MCF 10A (cell line): ENCODE measurements at regions of chr22 and their contacts with region 1.

Region 1: DNA sequence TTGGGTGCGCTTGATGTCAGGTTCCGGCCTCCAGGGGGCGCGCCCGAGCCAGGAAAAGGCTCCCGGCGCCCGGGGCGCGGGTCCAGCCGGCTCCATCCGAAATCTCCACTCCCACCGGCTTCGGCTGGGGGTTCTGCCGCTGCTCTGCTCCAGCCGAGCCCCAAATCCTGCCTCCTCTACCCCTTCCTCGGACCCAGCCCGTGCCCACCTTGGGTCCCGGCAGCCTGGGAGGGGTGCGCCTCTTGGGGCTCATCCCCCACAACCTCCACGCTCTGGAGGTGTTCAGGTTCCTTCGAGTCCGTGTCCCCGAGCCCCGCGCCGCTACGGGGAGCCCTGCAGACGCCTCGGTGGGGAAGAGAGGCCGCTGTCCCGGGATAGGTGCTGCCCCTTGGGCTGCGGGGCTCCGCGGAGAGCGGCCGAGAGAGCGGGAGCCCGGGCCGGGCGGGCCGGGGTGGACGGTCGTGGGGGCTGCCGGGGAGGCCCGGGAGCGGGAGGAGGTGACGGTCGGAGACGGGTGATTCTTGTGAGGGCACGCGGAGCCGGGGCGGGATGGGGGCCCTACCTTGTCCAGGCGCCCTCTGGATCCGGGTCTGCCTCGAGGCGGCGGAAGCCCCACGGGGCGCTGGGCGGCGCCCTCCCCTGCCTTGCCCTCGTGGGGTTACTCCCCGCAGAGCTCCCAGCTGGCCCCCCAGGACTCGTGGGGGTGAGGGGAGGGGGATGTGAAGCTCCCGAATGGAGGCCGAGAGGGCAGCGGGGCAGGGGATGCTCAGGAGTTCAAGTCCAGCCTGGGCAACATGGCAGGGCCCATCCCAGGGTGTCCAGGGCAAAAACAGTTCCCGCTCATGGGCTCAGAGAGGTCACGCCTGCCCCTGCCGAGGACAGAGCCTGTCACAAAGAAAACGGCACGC is 13.2 kb upstream of the CYB5R3 start:
- DNase-seq: peak; percentile 74
- H3K4me3 Mint-ChIP-seq: peak overlapping the region; percentile 28
- H3K27ac Mint-ChIP-seq: no peak overlapping the region
- H3K4me1 Mint-ChIP-seq: no peaks in the 10 kb centered on the region
- H3K27me3 Mint-ChIP-seq: no peaks in the 10 kb centered on the region
- CTCF ChIP-seq: peak; percentile 89

Region 2: DNA sequence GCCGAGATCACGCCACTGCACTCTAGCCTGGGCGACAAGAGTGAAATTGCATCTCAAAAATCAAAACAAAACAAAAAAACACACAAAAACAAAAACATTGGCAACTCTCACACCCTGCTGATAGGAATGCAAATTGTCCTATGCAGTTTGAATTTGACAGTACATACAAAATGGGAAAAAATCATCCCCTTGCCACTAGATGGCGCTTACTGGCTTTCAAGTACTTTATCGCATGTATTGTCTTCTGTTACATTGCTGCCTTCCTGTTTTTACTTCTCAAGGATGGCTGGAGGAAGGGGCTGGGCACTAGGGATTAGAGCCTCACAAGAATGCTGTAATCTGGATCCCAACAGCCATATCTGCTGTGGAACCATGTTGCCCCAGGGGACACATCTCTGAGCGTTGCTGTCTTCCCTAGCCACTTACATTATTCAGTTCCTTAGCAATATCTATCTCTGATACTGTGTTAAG is 117.7 kb after region 1 on chr22:
- CTCF ChIA-PET with region 1: interaction called, 3 read pairs
- POLR2A ChIA-PET with region 1: no interaction called
- intact Hi-C with region 1: loop called (anchors 1 kb)
- DNase-seq: peak; percentile 89
- H3K4me3 Mint-ChIP-seq: no peak overlapping the region
- H3K27ac Mint-ChIP-seq: no peak overlapping the region
- H3K4me1 Mint-ChIP-seq: no peaks in the 10 kb centered on the region
- H3K27me3 Mint-ChIP-seq: no peaks in the 10 kb centered on the region
- CTCF ChIP-seq: peak; percentile 87

Region 3: GRCh38 chr22:42820066-42820763 is 157.8 kb after region 1 on chr22:
- CTCF ChIA-PET with region 1: interaction called, 10 read pairs
- POLR2A ChIA-PET with region 1: no interaction called
- intact Hi-C with region 1: no loop called
- DNase-seq: peak; percentile 73
- H3K4me3 Mint-ChIP-seq: no peak overlapping the region
- H3K27ac Mint-ChIP-seq: peak overlapping the region; percentile 46
- H3K4me1 Mint-ChIP-seq: peaks cover 12% of the 10 kb centered on the region
- H3K27me3 Mint-ChIP-seq: no peaks in the 10 kb centered on the region
- CTCF ChIP-seq: peak; percentile 34

Region 4: GRCh38 chr22:42863349-42863961 is 201.1 kb after region 1 on chr22:
- CTCF ChIA-PET with region 1: interaction called, 6 read pairs
- POLR2A ChIA-PET with region 1: no interaction called
- intact Hi-C with region 1: loop called (anchors 1 kb)
- DNase-seq: peak; percentile 47
- H3K4me3 Mint-ChIP-seq: no peak overlapping the region
- H3K27ac Mint-ChIP-seq: peak overlapping the region; percentile 52
- H3K4me1 Mint-ChIP-seq: peaks cover 7% of the 10 kb centered on the region
- H3K27me3 Mint-ChIP-seq: no peaks in the 10 kb centered on the region
- CTCF ChIP-seq: no peak